ENCODE measurements at regions of chr18 and their contacts with region 1.

Region 1: GRCh38 chr18:26133652-26134051 is at the start of gene PSMA8:
- DNase-seq: peak; percentile 12 to 70 (median 23)
- ATAC-seq: peak in 3 of 4 donors; percentile 33 to 54 (median 50)
- H3K4me3 ChIP-seq: peak within 1 kb of the TSS in 10 of 12 donors; percentile 0 to 34 (median 20)
- H3K27ac ChIP-seq: no peak within 1 kb of the TSS
- H3K4me1 ChIP-seq: no peaks in the 10 kb centered on the region
- H3K27me3 ChIP-seq: no peaks in the 10 kb centered on the region
- CTCF ChIP-seq: no peak
- POLR2A ChIP-seq: no peak
- total RNA-seq, gene PSMA8: 0.16 TPM in 1 of 9 donors, not detected in the others

Region 2: DNA sequence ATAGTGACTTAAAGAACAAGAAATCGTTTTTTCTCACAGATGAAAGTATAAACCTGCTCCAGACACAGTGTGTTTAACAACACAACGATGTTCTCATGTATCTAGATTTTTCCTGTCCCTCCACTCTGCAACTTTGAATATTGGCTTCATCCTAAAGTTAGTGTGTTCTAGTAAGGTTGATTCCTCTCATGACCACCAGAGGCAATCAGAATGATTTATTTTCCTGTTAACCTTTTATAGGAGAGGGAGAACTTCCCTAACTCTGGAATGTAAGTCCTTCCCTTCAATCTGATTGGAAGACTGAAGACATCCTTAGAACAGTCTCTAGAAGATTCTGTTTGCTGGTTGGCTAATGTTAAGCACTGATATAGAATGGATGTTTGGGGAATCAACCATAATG is 51.6 kb after region 1 on chr18:
- intact Hi-C with region 1: loop called in 1 of 10 experiments (anchors 10 kb)
- DNase-seq: no peak
- ATAC-seq: no peak
- H3K4me3 ChIP-seq: no peak overlapping the region
- H3K27ac ChIP-seq: no peak overlapping the region
- H3K4me1 ChIP-seq: no peaks in the 10 kb centered on the region
- H3K27me3 ChIP-seq: no peaks in the 10 kb centered on the region
- CTCF ChIP-seq: no peak
- POLR2A ChIP-seq: no peak

Measured in heart left ventricle (tissue), 16 donors.